ENCODE measurements at regions of chr16 and their contacts with region 1.

Region 1: DNA sequence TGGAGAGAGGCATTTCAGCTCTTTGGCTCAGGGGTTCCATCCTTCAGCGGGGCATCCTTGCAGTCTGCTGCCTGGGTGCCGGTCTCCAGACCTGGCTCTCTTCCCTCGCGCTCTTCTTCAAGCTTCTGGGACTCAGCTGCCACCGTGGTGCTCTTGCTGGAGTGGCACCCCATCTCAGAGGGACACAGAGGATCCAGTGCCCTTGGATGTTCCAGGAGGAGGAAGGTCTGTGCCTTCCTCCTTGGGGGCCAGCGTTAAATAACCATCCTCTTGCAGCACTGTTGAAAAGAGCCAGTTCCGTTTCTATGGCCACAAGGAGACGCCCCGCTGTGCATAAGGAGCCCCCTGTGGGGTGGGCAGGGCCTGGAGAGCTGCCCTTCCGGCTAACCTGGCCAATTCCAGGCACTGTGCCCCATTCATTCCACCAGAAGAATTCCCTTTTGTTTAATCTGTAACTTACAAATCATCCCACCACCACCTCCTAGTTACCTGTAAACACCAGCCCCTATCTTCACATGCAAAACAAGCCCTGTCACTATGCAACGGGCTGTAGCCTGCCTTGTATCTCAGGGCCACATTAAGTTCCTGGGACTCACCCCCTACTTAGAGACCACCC is 8.6 kb downstream of the CHD9NB start:
- DNase-seq: peak; percentile 92 to 98
- H3K4me3 ChIP-seq: peak overlapping the region; percentile 53 to 69 (median 63)
- H3K27ac ChIP-seq: peak overlapping the region; percentile 77
- H3K4me1 ChIP-seq: peaks cover 2 to 27% (median 21%) of the 10 kb centered on the region in 4 experiments; a peak in 6 of 7 replicates
- H3K27me3 ChIP-seq: no peaks in the 10 kb centered on the region
- CTCF ChIP-seq: no peak
- EP300 ChIP-seq: peak; percentile 48 to 91
- POLR2A ChIP-seq: peak; percentile 92 to 97
- RAD21 ChIP-seq: 0 out of 4 replicates have a peak, but pooled peaks of 1 of the 2 experiments have one; percentile 11

Region 2: GRCh38 chr16:52932321-52932720 is 111.8 kb before region 1 on chr16:
- CTCF ChIA-PET with region 1: no interaction called
- POLR2A ChIA-PET with region 1: no interaction called
- DNase-seq: no peak
- H3K4me3 ChIP-seq: no peak overlapping the region
- H3K27ac ChIP-seq: no peak overlapping the region
- H3K4me1 ChIP-seq: no peaks in the 10 kb centered on the region
- H3K27me3 ChIP-seq: no peaks in the 10 kb centered on the region
- CTCF ChIP-seq: no peak
- EP300 ChIP-seq: no peak
- POLR2A ChIP-seq: no peak
- RAD21 ChIP-seq: no peak

Region 3: GRCh38 chr16:53031323-53031942 is 12.7 kb before region 1 on chr16:
- CTCF ChIA-PET with region 1: interaction called, 3 read pairs
- POLR2A ChIA-PET with region 1: interaction called, 15 read pairs
- DNase-seq: no peak
- H3K4me3 ChIP-seq: peak overlapping the region in 1 of 4 experiments; percentile 33; a peak in 3 of 8 replicates
- H3K27ac ChIP-seq: no peak overlapping the region
- H3K4me1 ChIP-seq: peaks cover 0 to 15% (median 4%) of the 10 kb centered on the region in 4 experiments; a peak in 5 of 7 replicates
- H3K27me3 ChIP-seq: peaks cover 0 to 2% (median 0%) of the 10 kb centered on the region in 4 experiments; a peak in 1 of 7 replicates
- CTCF ChIP-seq: no peak
- EP300 ChIP-seq: no peak
- POLR2A ChIP-seq: no peak
- RAD21 ChIP-seq: no peak

Measured in H1 (cell line).